GM10248 (cell line): ENCODE measurements at regions of chr1 and their contacts with region 1.

Region 1: GRCh38 chr1:171801487-171801891 is 20.0 kb downstream of the METTL13 start:
- DNase-seq: peak; percentile 48
- CTCF ChIP-seq: peak; percentile 80

Region 2: DNA sequence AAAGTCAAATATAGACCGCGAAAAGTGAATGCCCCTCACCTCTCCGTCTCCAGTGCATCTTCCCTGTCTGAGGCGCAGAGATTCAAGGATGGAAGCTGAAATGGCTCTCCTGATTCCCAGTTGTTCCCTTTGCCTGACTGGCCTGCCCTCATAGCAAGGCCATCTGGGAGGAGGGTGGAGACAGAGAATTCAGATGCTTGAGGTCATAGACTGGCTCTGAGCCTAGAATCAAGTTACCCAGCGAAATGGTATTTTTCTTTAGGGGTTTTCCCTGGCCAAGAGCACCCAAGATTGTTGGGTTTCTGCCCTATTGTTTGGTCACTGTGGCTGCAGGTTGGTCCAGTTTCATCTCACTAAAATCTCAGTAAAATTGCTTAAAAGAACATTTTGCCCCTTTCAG is 12.8 kb before region 1 on chr1:
- CTCF ChIA-PET with region 1: interaction called, 28 read pairs
- POLR2A ChIA-PET with region 1: no interaction called
- DNase-seq: no peak
- CTCF ChIP-seq: no peak

Region 3: GRCh38 chr1:171817511-171818265 is 16.2 kb after region 1 on chr1:
- CTCF ChIA-PET with region 1: interaction called, 43 read pairs
- POLR2A ChIA-PET with region 1: no interaction called
- DNase-seq: peak; percentile 31
- CTCF ChIP-seq: no peak

Region 4: GRCh38 chr1:171841050-171841940 is 39.8 kb after region 1 on chr1 and contains the start of gene DNM3:
- CTCF ChIA-PET with region 1: interaction called, 10 read pairs
- POLR2A ChIA-PET with region 1: no interaction called
- DNase-seq: peak; percentile 91
- CTCF ChIP-seq: no peak

Region 5: GRCh38 chr1:171984850-171985485 is 183.5 kb after region 1 on chr1:
- CTCF ChIA-PET with region 1: interaction called, 171 read pairs
- POLR2A ChIA-PET with region 1: no interaction called
- DNase-seq: peak; percentile 36
- CTCF ChIP-seq: peak; percentile 72